Activated B cell treated with CpG ODN at 0.5 μM for 24 hours (primary cell): ENCODE measurements at regions of chr1 and their contacts with region 1.

Region 1: DNA sequence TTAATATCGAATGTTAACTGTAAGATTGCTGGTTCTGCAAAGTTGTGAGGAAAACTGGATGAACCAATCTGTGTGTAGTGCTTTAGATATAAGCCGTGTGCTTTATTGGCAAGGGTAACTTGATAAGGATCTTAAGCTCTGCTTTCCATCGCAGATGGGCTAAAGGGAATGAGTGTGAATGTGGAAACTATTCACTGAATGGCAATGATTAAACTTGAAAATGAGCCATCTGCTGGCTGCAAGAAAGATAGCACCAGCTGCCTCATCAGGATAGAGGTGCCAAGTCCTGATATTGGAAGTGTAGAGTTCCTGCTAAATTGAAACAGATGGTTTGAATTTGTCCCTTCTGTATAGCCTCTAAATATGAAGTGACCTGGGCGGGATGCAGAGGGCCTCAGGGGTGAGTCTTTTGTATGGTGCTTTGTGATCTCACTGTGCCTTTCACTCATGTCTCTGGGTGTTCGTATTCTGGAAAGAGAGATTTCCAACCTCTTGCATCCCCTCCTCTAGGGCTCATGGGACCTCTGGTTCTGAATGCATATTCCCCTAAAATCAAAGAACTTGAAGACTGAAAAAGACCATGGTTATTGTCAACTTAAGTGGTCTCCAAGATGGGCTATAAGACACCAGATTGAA is 9.2 kb downstream of the FCRL3 start:
- DNase-seq: no peak
- ATAC-seq: peak; percentile 62
- H3K4me3 Mint-ChIP-seq: no peak overlapping the region
- H3K27ac Mint-ChIP-seq: peak overlapping the region; percentile 69
- H3K4me1 Mint-ChIP-seq: peaks cover 86% of the 10 kb centered on the region
- H3K27me3 Mint-ChIP-seq: no peaks in the 10 kb centered on the region
- CTCF ChIP-seq: no peak

Region 2: GRCh38 chr1:157325220-157325619 is 366.2 kb before region 1 on chr1:
- CTCF ChIA-PET with region 1: no interaction called
- POLR2A ChIA-PET with region 1: no interaction called
- intact Hi-C with region 1: no loop called
- DNase-seq: no peak
- ATAC-seq: no peak
- H3K4me3 Mint-ChIP-seq: no peak overlapping the region
- H3K27ac Mint-ChIP-seq: no peak overlapping the region
- H3K4me1 Mint-ChIP-seq: no peaks in the 10 kb centered on the region
- H3K27me3 Mint-ChIP-seq: peaks cover 34% of the 10 kb centered on the region
- CTCF ChIP-seq: no peak

Region 3: DNA sequence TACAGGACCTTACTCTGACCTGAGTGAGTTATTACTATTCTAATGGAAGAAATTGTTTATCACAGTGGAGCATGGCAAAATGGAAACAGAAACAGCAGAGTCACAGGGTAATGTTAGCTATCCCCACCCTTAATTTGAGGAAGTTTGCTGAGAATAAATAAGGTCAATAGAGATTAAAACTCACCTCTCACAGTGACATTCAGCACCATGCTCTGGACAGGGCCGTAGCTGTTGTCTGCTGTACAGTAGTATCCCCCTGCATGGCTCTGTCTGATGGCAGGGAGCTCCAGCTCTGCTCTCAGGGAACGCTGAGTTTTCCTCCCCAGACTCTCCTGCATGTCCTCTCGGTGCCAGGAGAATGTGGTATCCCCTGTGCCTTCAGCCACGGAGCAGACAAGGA is 105.4 kb before region 1 on chr1:
- CTCF ChIA-PET with region 1: interaction called, 123 read pairs
- POLR2A ChIA-PET with region 1: interaction called, 12 read pairs
- intact Hi-C with region 1: no loop called
- DNase-seq: no peak
- ATAC-seq: peak; percentile 35
- H3K4me3 Mint-ChIP-seq: no peak overlapping the region
- H3K27ac Mint-ChIP-seq: no peak overlapping the region
- H3K4me1 Mint-ChIP-seq: peaks cover 65% of the 10 kb centered on the region
- H3K27me3 Mint-ChIP-seq: no peaks in the 10 kb centered on the region
- CTCF ChIP-seq: no peak

Region 4: GRCh38 chr1:157725221-157725577 is 33.8 kb after region 1 on chr1:
- CTCF ChIA-PET with region 1: interaction called, 5 read pairs
- POLR2A ChIA-PET with region 1: interaction called, 7 read pairs
- intact Hi-C with region 1: loop called (anchors 5 kb)
- DNase-seq: no peak
- ATAC-seq: peak; percentile 17
- H3K4me3 Mint-ChIP-seq: peak overlapping the region; percentile 16
- H3K27ac Mint-ChIP-seq: peak overlapping the region; percentile 97
- H3K4me1 Mint-ChIP-seq: peaks cover 71% of the 10 kb centered on the region
- H3K27me3 Mint-ChIP-seq: no peaks in the 10 kb centered on the region
- CTCF ChIP-seq: no peak

Region 5: DNA sequence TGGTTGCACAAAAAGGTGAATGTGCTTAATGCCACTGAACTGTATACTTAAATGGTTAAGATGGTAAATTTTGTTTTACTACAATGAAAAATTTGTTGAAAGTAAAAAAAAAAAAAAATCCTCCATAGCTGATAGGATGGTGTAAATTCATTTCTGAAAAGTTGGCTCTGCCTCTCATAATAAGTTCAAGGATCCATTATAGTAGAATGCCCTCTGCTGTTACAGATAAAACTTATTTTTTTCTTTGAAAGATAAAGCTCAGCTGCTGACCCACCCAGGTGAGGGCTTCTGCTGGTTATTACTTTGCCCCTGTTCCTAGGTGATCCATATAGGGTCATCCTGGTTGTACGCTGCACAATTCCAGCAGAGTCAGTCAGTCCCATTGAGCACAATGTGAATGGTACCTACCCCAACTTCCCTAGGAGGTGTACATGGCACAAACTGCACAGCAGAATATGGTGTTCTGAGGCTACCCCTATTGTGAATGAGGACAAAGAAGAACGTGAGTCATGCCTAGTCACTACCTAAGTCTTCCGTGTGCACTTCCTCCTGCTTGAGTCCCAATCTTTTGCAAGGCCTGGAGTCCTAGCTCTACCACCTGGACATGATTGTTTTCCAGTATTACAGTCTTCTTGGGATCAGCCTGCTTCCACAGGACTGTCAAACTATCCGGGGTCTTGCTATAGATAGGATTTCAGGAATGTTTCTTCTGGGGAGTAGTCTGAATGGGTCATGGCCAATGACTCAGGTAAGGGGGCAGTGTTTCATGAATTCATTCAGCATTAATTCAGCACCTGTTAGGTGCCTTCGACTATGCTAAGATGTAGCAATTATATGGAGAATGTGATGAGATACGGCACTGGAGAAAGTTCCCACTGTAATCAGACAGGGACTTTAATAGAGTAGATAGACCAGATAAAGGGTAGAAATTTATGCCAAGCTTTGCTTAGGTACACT is 171.0 kb after region 1 on chr1:
- CTCF ChIA-PET with region 1: interaction called, 9 read pairs
- POLR2A ChIA-PET with region 1: no interaction called
- intact Hi-C with region 1: loop called (anchors 2 kb)
- DNase-seq: no peak
- ATAC-seq: peak; percentile 47
- H3K4me3 Mint-ChIP-seq: no peak overlapping the region
- H3K27ac Mint-ChIP-seq: peak overlapping the region; percentile 31
- H3K4me1 Mint-ChIP-seq: peaks cover 18% of the 10 kb centered on the region
- H3K27me3 Mint-ChIP-seq: no peaks in the 10 kb centered on the region
- CTCF ChIP-seq: no peak

Region 6: GRCh38 chr1:157963713-157964112 is 272.3 kb after region 1 on chr1:
- CTCF ChIA-PET with region 1: no interaction called
- POLR2A ChIA-PET with region 1: no interaction called
- intact Hi-C with region 1: no loop called
- DNase-seq: peak; percentile 52
- ATAC-seq: peak; percentile 57
- H3K4me3 Mint-ChIP-seq: no peak overlapping the region
- H3K27ac Mint-ChIP-seq: no peak overlapping the region
- H3K4me1 Mint-ChIP-seq: no peaks in the 10 kb centered on the region
- H3K27me3 Mint-ChIP-seq: peaks cover 22% of the 10 kb centered on the region
- CTCF ChIP-seq: peak; percentile 80